ENCODE measurements at regions of chr7 and their contacts with region 1.

Region 1: GRCh38 chr7:123682690-123683089 is 27.0 kb downstream of the LMOD2 start:
- DNase-seq: peak; percentile 78
- H3K4me3 Mint-ChIP-seq: no peak overlapping the region
- H3K27ac Mint-ChIP-seq: no peak overlapping the region
- H3K4me1 Mint-ChIP-seq: no peaks in the 10 kb centered on the region
- H3K27me3 Mint-ChIP-seq: no peaks in the 10 kb centered on the region

Region 2: GRCh38 chr7:123705211-123705901 is 22.7 kb after region 1 on chr7:
- intact Hi-C with region 1: loop called (anchors 2 kb)
- DNase-seq: no peak
- H3K4me3 Mint-ChIP-seq: no peak overlapping the region
- H3K27ac Mint-ChIP-seq: no peak overlapping the region
- H3K4me1 Mint-ChIP-seq: peaks cover 8% of the 10 kb centered on the region
- H3K27me3 Mint-ChIP-seq: no peaks in the 10 kb centered on the region

Region 3: GRCh38 chr7:123719197-123719721 is 36.6 kb after region 1 on chr7:
- intact Hi-C with region 1: no loop called
- DNase-seq: no peak
- H3K4me3 Mint-ChIP-seq: peak overlapping the region; percentile 39
- H3K27ac Mint-ChIP-seq: peak overlapping the region; percentile 75
- H3K4me1 Mint-ChIP-seq: peaks cover 35% of the 10 kb centered on the region
- H3K27me3 Mint-ChIP-seq: no peaks in the 10 kb centered on the region

Region 4: GRCh38 chr7:123797673-123798527 is 115.2 kb after region 1 on chr7:
- intact Hi-C with region 1: loop called (anchors 2 kb)
- DNase-seq: no peak
- H3K4me3 Mint-ChIP-seq: no peak overlapping the region
- H3K27ac Mint-ChIP-seq: no peak overlapping the region
- H3K4me1 Mint-ChIP-seq: peaks cover 2% of the 10 kb centered on the region
- H3K27me3 Mint-ChIP-seq: no peaks in the 10 kb centered on the region

Region 5: DNA sequence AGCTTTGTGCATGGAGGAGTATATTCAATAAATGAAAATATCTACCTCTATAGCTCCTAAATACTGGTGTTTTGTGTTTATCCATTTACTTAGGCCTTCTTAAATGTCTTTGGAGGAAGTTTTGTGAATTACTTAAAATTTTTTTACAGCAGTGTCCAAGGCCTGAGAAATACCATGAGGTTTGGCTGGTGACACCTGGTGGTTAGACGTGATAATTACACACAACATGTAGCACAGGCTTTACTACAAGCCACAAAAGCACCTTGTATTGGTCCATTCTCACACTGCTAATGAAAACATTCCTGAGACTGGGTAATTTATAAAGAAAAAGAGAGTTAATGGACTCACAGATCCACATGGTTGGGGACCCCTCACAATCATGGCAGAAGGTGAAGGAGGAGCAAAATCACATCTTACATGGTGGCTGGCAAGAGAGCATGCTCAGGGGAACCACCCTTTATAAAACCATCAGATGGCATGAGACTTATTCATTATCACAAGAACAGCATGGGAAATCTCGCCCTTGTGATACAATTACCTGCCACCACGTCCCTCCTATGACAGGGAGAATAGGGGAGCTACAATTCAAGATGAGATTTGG is 182.9 kb after region 1 on chr7:
- intact Hi-C with region 1: loop called (anchors 1 kb)
- DNase-seq: peak; percentile 84
- H3K4me3 Mint-ChIP-seq: no peak overlapping the region
- H3K27ac Mint-ChIP-seq: no peak overlapping the region
- H3K4me1 Mint-ChIP-seq: no peaks in the 10 kb centered on the region
- H3K27me3 Mint-ChIP-seq: peaks cover 7% of the 10 kb centered on the region

Region 6: GRCh38 chr7:124188576-124188975 is 505.9 kb after region 1 on chr7:
- intact Hi-C with region 1: no loop called
- DNase-seq: no peak
- H3K4me3 Mint-ChIP-seq: no peak overlapping the region
- H3K27ac Mint-ChIP-seq: no peak overlapping the region
- H3K4me1 Mint-ChIP-seq: no peaks in the 10 kb centered on the region
- H3K27me3 Mint-ChIP-seq: no peaks in the 10 kb centered on the region